ENCODE measurements at regions of chr5 and their contacts with region 1.

Region 1: DNA sequence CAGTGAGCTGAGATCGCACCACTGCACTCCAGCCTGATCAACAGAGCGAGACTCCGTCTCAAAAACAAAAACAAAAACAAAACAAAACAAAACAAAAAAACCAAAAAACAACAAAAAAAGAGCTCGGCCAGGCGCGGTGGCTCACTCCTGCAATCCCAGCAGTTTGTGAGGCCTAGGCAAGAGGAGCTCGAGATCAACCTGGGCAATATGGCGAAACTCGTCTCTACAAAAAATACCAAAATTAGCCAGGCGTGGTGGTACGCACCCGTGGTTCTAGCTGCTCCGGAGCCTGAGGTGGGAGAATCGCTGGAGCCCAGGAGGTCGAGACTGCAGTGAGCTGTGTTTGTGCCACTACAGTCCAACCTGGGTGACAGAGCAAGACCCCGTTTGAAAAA is 20.1 kb downstream of the TRIM7 start:
- DNase-seq: no peak
- ATAC-seq: no peak
- H3K4me3 Mint-ChIP-seq: peak overlapping the region; percentile 98
- H3K27ac Mint-ChIP-seq: peak overlapping the region; percentile 99
- H3K4me1 Mint-ChIP-seq: peaks cover 30% of the 10 kb centered on the region
- H3K27me3 Mint-ChIP-seq: peaks cover 4% of the 10 kb centered on the region

Region 2: GRCh38 chr5:181173420-181174342 is 11.2 kb before region 1 on chr5:
- POLR2A ChIA-PET with region 1: interaction called, 23 read pairs
- DNase-seq: peak; percentile 70
- ATAC-seq: peak; percentile 82
- H3K4me3 Mint-ChIP-seq: peak overlapping the region; percentile 97
- H3K27ac Mint-ChIP-seq: peak overlapping the region; percentile 98
- H3K4me1 Mint-ChIP-seq: peaks cover 38% of the 10 kb centered on the region
- H3K27me3 Mint-ChIP-seq: peaks cover 18% of the 10 kb centered on the region

Region 3: DNA sequence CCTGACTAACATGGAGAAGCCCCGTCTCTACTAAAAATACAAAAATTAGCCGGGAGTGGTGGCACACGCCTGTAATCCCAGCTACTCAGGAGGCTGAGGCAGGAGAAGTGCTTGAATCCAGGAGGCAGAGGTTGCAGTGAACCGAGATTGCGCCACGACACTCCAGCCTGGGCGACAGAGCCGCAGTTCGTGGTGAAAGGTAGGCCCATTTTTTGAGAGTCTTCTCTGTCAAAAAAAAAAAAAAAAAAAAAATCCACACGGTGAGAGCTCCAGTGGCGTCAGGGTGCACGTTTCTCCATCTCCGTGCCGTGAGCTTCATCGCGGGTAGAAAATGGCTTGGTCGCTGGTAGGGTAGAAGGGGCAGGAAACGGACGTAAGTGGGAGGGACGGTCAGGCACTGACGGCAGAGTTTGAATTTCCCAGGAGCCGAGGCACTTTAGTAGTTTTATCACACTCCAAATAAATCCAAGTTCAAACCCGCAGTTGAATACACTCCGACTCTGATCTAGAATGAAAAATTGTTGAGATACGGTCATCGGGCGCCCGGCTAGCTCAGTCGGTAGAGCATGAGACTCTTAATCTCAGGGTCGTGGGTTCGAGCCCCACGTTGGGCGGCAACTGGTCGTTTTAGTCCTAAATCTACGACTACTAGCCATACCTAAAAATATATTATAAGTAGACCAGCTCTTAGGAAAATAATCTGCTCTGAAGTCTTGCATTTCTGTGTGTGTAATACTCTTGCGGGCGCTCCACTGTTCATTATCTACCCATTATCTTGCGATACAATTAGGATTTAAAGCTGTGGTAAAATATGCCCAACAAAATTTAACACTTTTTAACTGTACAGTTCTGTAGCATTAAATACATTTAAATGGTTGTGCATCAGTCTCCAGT is 22.6 kb after region 1 on chr5:
- POLR2A ChIA-PET with region 1: interaction called, 131 read pairs
- DNase-seq: peak; percentile 77
- ATAC-seq: peak; percentile 58
- H3K4me3 Mint-ChIP-seq: peak overlapping the region; percentile 86
- H3K27ac Mint-ChIP-seq: peak overlapping the region; percentile 87
- H3K4me1 Mint-ChIP-seq: peaks cover 29% of the 10 kb centered on the region
- H3K27me3 Mint-ChIP-seq: peaks cover 27% of the 10 kb centered on the region

Region 4: DNA sequence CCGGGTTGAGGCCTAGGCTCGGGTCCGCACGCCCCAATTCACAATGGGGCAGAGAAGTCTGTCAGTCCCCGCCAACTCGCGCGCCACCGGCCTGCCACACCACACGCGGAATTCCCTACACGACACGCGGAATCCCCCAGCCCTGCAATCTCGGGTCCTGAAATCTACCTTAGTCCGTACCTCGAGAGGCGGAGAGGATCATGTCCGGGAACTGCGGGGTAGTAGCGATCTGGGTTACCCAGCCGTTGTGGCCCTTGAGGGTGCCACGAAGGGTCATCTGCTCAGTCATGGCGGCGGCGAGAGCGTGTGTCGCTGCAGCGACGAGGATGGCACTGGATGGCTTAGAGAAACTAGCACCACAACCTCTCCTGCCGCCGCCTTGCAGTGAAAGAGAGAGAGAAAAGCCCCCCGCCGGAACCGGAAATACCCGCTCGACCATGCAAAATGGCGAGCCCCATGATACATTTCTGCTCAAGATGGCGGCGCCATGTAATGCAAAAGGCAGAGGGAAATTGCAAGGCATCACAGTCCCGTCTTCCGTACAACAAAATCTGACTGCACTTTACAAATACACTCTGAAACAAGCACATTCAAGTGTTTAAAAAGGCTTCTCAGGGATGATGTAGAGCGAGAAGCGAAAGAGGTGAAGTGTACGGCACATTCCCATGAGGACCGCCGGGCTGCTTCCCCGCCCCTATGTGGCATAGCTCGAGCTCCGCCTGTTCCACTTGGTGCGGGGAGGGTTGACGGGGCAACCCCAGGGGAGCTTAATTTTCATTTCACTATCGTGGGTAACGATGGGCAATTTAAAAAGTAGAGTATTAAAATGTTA is 58.9 kb after region 1 on chr5 and contains the start of gene RACK1:
- POLR2A ChIA-PET with region 1: interaction called, 10 read pairs
- DNase-seq: peak; percentile 84
- ATAC-seq: peak; percentile 68
- H3K4me3 Mint-ChIP-seq: peak within 1 kb of the TSS; percentile 95
- H3K27ac Mint-ChIP-seq: peak within 1 kb of the TSS; percentile 92
- H3K4me1 Mint-ChIP-seq: peaks cover 39% of the 10 kb centered on the region
- H3K27me3 Mint-ChIP-seq: no peaks in the 10 kb centered on the region
- total RNA-seq, gene RACK1: 1,741 to 1,808 TPM

Region 5: GRCh38 chr5:181260387-181261319 is 75.8 kb after region 1 on chr5 and contains the start of gene TRIM52:
- POLR2A ChIA-PET with region 1: interaction called, 73 read pairs
- DNase-seq: peak; percentile 91
- ATAC-seq: peak; percentile 86
- H3K4me3 Mint-ChIP-seq: peak within 1 kb of the TSS; percentile 97
- H3K27ac Mint-ChIP-seq: peak within 1 kb of the TSS; percentile 93
- H3K4me1 Mint-ChIP-seq: peaks cover 38% of the 10 kb centered on the region
- H3K27me3 Mint-ChIP-seq: no peaks in the 10 kb centered on the region
- total RNA-seq, gene TRIM52: 43.0 to 43.5 TPM

Region 6: DNA sequence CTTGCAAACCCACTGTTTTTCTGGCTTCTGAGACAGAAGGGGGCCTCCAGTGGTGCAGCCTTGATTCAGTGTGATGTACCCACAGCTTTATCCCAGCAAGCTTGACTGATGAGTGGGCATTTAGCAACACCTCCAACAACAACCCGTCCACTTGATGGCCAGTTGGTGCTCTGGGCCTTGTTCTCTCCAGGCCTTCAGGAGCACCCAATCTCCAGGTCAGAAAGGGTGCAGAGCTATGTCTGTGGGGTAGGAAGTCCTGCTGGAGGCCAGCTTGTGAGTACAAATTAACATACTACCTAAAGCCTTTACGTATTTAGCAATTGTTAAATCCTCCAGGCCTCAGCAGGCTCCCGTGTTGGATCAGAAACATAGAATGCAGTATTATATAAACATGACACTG is 86.2 kb after region 1 on chr5:
- POLR2A ChIA-PET with region 1: no interaction called
- DNase-seq: no peak
- ATAC-seq: no peak
- H3K4me3 Mint-ChIP-seq: no peak overlapping the region
- H3K27ac Mint-ChIP-seq: no peak overlapping the region
- H3K4me1 Mint-ChIP-seq: no peaks in the 10 kb centered on the region
- H3K27me3 Mint-ChIP-seq: no peaks in the 10 kb centered on the region

Measured in activated naive CD8-positive, alpha-beta T cell treated with anti-CD3 and anti-CD28 coated beads, Interleukin-2, amount 10 ng/mL, durations not matched to agents 7 days and 5 days (primary cell).